Gastrocnemius medialis (tissue), 4 donors: ENCODE measurements at regions of chr13 and their contacts with region 1.

Region 1: GRCh38 chr13:24187185-24187584 is 26.7 kb downstream of the SPATA13 start:
- DNase-seq: no peak
- ATAC-seq: no peak
- H3K4me3 ChIP-seq: no peak overlapping the region
- H3K27ac ChIP-seq: no peak overlapping the region
- H3K4me1 ChIP-seq: no peaks in the 10 kb centered on the region
- H3K27me3 ChIP-seq: no peaks in the 10 kb centered on the region
- CTCF ChIP-seq: no peak
- POLR2A ChIP-seq: no peak

Region 2: DNA sequence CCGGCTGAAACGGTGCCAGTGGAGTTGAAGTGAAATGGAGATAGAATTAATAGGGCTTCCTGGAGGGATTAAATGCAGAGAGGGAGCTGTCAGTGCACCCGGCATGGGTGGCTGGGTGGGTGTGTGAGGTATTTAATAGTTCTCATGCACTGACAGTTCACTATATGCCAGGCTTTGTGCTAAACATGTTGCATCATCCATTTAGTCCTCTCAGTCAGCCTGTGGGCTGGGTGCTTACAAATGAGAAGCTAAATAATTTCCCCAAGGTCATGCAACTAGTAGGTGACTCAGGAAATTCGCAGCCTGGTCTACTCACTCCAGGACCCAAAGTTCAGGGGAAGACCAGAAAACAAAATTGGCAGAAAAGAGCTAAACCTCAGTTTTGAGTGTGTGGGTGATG is 90.1 kb before region 1 on chr13:
- in situ Hi-C with region 1: loop called in 1 of 4 experiments (anchors 25 kb)
- intact Hi-C with region 1: no loop called
- DNase-seq: no peak
- ATAC-seq: no peak
- H3K4me3 ChIP-seq: no peak overlapping the region
- H3K27ac ChIP-seq: no peak overlapping the region
- H3K4me1 ChIP-seq: no peaks in the 10 kb centered on the region
- H3K27me3 ChIP-seq: no peaks in the 10 kb centered on the region
- CTCF ChIP-seq: no peak
- POLR2A ChIP-seq: no peak